ENCODE measurements at regions of chr18 and their contacts with region 1.

Region 1: GRCh38 chr18:31386741-31387140 is 10.2 kb downstream of the DSG4 start:
- DNase-seq: no peak
- ATAC-seq: no peak
- H3K4me3 ChIP-seq: no peak overlapping the region
- H3K27ac ChIP-seq: no peak overlapping the region
- H3K4me1 ChIP-seq: no peaks in the 10 kb centered on the region
- H3K27me3 ChIP-seq: no peaks in the 10 kb centered on the region
- CTCF ChIP-seq: no peak
- EP300 ChIP-seq: no peak
- POLR2A ChIP-seq: no peak
- RAD21 ChIP-seq: no peak

Region 2: GRCh38 chr18:30658306-30658705 is 728.4 kb before region 1 on chr18:
- CTCF ChIA-PET with region 1: no interaction called
- POLR2A ChIA-PET with region 1: no interaction called
- RAD21 ChIA-PET with region 1: no interaction called
- SMC1A ChIA-PET with region 1: no interaction called
- in situ Hi-C with region 1: no loop called
- intact Hi-C with region 1: no loop called
- DNase-seq: no peak
- ATAC-seq: no peak
- H3K4me3 ChIP-seq: no peak overlapping the region
- H3K27ac ChIP-seq: no peak overlapping the region
- H3K4me1 ChIP-seq: no peaks in the 10 kb centered on the region
- H3K27me3 ChIP-seq: no peaks in the 10 kb centered on the region
- CTCF ChIP-seq: no peak
- EP300 ChIP-seq: no peak
- POLR2A ChIP-seq: no peak
- RAD21 ChIP-seq: no peak

Region 3: DNA sequence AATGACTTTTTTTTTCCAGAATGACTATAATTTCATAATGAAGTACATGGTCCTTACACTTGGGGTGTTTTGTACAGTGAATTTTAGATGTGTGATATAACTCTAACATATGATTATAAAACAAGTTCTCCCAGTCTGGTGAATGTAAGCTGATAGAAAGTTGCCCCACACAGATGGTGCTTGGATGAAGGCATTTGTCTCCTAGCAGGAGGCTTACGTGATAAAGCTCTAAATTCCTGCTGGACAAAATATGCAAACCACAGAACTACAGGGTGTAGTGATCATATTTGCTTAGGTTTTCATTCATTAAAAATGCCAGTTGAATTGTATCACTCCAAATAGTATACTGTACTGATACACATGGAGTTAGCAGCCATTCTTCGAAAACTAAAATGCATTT is 429.7 kb before region 1 on chr18:
- CTCF ChIA-PET with region 1: no interaction called
- POLR2A ChIA-PET with region 1: no interaction called
- RAD21 ChIA-PET with region 1: no interaction called
- SMC1A ChIA-PET with region 1: no interaction called
- in situ Hi-C with region 1: no loop called
- intact Hi-C with region 1: no loop called
- DNase-seq: no peak
- ATAC-seq: no peak
- H3K4me3 ChIP-seq: no peak overlapping the region
- H3K27ac ChIP-seq: no peak overlapping the region
- H3K4me1 ChIP-seq: no peaks in the 10 kb centered on the region
- H3K27me3 ChIP-seq: no peaks in the 10 kb centered on the region; a peak in 1 of 4 replicates
- CTCF ChIP-seq: no peak
- EP300 ChIP-seq: no peak
- POLR2A ChIP-seq: no peak
- RAD21 ChIP-seq: no peak

Region 4: GRCh38 chr18:31099450-31100230 is 287.1 kb before region 1 on chr18:
- CTCF ChIA-PET with region 1: no interaction called
- POLR2A ChIA-PET with region 1: no interaction called
- RAD21 ChIA-PET with region 1: no interaction called
- SMC1A ChIA-PET with region 1: no interaction called
- in situ Hi-C with region 1: no loop called
- intact Hi-C with region 1: loop called (anchors 10 kb)
- DNase-seq: no peak
- ATAC-seq: no peak
- H3K4me3 ChIP-seq: no peak overlapping the region
- H3K27ac ChIP-seq: no peak overlapping the region
- H3K4me1 ChIP-seq: no peaks in the 10 kb centered on the region
- H3K27me3 ChIP-seq: peaks cover 0 to 4% of the 10 kb centered on the region in 2 experiments; a peak in 3 of 4 replicates
- CTCF ChIP-seq: no peak
- EP300 ChIP-seq: no peak
- POLR2A ChIP-seq: no peak
- RAD21 ChIP-seq: no peak

Region 5: DNA sequence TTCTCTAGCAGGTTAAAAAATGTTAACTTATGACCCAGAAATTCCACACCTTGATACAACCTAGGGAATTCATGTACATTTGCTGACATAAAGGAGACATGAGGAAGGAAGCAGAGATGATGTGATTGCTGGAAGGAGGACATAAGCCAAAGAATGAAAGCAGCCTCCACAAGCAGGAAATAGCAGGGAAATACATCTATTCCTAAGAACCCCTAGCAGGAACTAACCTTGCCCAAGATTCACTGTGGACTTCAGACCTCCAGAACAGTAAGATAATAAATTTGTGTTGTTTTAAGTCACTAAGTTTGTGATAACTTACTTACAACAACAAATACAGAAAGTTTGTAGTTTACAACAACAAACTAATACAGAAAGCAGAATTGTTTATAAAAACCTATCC is 14.8 kb before region 1 on chr18:
- CTCF ChIA-PET with region 1: no interaction called
- POLR2A ChIA-PET with region 1: no interaction called
- RAD21 ChIA-PET with region 1: no interaction called
- SMC1A ChIA-PET with region 1: no interaction called
- in situ Hi-C with region 1: no loop called
- intact Hi-C with region 1: loop called (anchors 2 kb)
- DNase-seq: no peak
- ATAC-seq: no peak
- H3K4me3 ChIP-seq: no peak overlapping the region
- H3K27ac ChIP-seq: no peak overlapping the region
- H3K4me1 ChIP-seq: no peaks in the 10 kb centered on the region
- H3K27me3 ChIP-seq: no peaks in the 10 kb centered on the region
- CTCF ChIP-seq: no peak
- EP300 ChIP-seq: no peak
- POLR2A ChIP-seq: no peak
- RAD21 ChIP-seq: no peak

Region 6: GRCh38 chr18:31814132-31814531 is 427.4 kb after region 1 on chr18:
- CTCF ChIA-PET with region 1: no interaction called
- POLR2A ChIA-PET with region 1: no interaction called
- RAD21 ChIA-PET with region 1: no interaction called
- SMC1A ChIA-PET with region 1: no interaction called
- in situ Hi-C with region 1: no loop called
- intact Hi-C with region 1: no loop called
- DNase-seq: no peak
- ATAC-seq: no peak
- H3K4me3 ChIP-seq: no peak overlapping the region
- H3K27ac ChIP-seq: no peak overlapping the region
- H3K4me1 ChIP-seq: no peaks in the 10 kb centered on the region
- H3K27me3 ChIP-seq: no peaks in the 10 kb centered on the region
- CTCF ChIP-seq: no peak
- EP300 ChIP-seq: no peak
- POLR2A ChIP-seq: no peak
- RAD21 ChIP-seq: no peak